ENCODE measurements at regions of chr15 and their contacts with region 1.

Region 1: DNA sequence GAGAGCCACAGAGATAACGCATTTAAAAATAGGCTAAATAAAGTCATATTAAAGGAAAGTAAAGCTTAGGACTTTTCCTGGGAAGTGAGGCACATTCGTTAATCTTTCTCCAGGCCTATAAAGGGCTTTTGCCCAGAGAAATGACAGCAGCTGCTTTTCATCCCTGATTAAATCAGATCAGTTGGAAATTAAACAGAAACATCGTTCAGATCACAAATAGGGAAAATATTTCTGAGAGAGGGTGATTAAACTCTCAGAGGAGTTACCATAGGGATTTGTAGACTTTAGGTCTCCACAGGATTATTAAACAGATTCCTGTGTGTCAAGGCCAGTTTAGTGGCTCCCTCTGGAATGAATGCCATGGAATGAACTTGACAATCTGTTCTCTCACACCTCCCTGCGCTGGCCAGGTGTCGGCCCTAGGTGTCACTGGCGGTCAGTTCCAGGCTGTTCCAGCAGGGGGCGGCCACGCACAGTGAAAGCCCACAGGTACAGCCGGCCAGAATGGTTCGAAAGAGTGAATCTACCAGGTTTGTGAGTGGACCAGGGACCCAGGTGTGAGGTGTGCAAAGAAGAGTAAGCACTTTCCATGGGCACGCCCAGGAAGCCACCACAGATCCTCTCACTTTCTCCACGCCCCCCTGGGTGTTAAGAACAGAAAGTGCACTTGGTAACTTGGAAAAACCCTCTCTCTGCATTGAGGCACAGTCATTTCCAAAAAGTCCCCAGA is 253.0 kb upstream of the RASGRP1 start:
- DNase-seq: peak; percentile 48
- ATAC-seq: peak; percentile 97
- H3K4me3 ChIP-seq: no peak overlapping the region
- H3K27ac ChIP-seq: peak overlapping the region; percentile 26
- H3K4me1 ChIP-seq: peaks cover 8% of the 10 kb centered on the region
- H3K27me3 ChIP-seq: no peaks in the 10 kb centered on the region
- CTCF ChIP-seq: peak; percentile 98
- POLR2A ChIP-seq: no peak
- RAD21 ChIP-seq: peak; percentile 95

Region 2: DNA sequence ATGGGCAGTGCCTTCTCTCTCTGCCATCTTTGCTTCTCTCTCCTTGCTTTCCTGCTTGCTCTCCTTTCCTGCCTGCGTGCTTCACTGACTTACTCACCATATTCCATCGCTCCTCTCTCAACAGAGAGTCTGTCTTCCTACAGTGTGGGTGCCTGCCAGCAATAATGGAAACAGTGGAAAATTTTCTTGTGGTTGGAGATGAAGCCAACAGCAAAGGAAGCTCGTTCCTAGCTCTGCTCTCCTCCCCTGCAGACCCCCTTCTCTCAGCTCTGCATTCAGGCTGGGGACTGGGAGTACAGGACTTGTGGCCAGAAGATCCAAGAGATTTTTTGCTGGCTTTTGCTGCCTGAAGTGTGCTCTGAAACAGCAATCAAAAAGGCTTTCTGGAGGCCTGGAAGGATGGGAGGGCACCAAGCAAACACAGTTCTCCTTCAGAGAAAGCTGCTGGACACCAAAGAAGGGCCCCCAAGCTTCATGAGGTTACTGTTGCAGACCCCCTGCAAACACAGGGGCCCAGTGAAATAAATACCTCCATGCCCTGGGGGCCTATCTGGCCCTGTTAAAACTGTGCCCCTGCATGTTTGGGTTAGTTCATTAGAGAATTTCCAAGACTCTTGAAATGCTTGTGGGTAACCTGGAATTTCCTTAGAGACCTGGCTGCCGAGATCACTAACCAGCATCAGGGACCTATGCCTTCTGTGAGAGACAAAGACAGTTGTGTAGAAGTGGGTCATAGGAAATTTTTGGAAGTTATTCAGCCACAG is 103.1 kb before region 1 on chr15:
- CTCF ChIA-PET with region 1: interaction called, 4 read pairs
- POLR2A ChIA-PET with region 1: interaction called, 3 read pairs
- dilution Hi-C with region 1: no loop called
- in situ Hi-C with region 1: no loop called
- intact Hi-C with region 1: loop called (anchors 2 kb)
- DNase-seq: peak; percentile 96
- ATAC-seq: peak; percentile 92
- H3K4me3 ChIP-seq: no peak overlapping the region
- H3K27ac ChIP-seq: peak overlapping the region; percentile 88
- H3K4me1 ChIP-seq: peaks cover 12% of the 10 kb centered on the region
- H3K27me3 ChIP-seq: no peaks in the 10 kb centered on the region
- CTCF ChIP-seq: no peak
- POLR2A ChIP-seq: no peak
- RAD21 ChIP-seq: peak; percentile 28; the same call in 1 of the 2 replicates

Region 3: GRCh38 chr15:38829086-38829485 is 11.5 kb after region 1 on chr15:
- CTCF ChIA-PET with region 1: no interaction called
- POLR2A ChIA-PET with region 1: no interaction called
- dilution Hi-C with region 1: no loop called
- in situ Hi-C with region 1: no loop called
- intact Hi-C with region 1: no loop called
- DNase-seq: no peak
- ATAC-seq: no peak
- H3K4me3 ChIP-seq: no peak overlapping the region
- H3K27ac ChIP-seq: no peak overlapping the region
- H3K4me1 ChIP-seq: peaks cover 8% of the 10 kb centered on the region
- H3K27me3 ChIP-seq: no peaks in the 10 kb centered on the region
- CTCF ChIP-seq: no peak
- POLR2A ChIP-seq: no peak
- RAD21 ChIP-seq: no peak

Region 4: DNA sequence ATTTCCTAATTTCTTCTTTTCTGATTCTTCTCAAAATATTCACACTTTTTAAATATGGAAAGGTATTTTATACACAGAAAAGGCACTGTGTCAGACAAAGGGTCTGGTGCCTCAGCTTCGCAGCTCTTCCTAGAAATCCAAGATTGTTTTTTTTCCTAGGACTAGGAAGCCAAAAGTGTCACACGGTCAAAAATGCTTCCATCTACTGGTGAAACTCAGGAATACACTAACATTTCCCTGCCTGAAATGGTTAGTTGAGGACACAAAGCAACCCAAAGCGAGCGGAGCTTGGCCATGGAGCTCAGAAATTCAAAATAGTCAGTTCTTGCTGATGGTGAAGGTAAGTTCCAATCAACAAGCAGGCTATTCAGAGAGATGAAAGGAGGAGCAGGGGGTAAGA is 173.5 kb after region 1 on chr15:
- CTCF ChIA-PET with region 1: interaction called, 4 read pairs
- POLR2A ChIA-PET with region 1: interaction called, 4 read pairs
- dilution Hi-C with region 1: no loop called
- in situ Hi-C with region 1: no loop called
- intact Hi-C with region 1: loop called (anchors 1 kb)
- DNase-seq: peak; percentile 56
- ATAC-seq: no peak
- H3K4me3 ChIP-seq: no peak overlapping the region
- H3K27ac ChIP-seq: no peak overlapping the region
- H3K4me1 ChIP-seq: peaks cover 22% of the 10 kb centered on the region
- H3K27me3 ChIP-seq: no peaks in the 10 kb centered on the region
- CTCF ChIP-seq: peak; percentile 50
- POLR2A ChIP-seq: no peak
- RAD21 ChIP-seq: peak; percentile 50